Activated naive CD4-positive, alpha-beta T cell treated with anti-CD3 and anti-CD28 coated beads for 36 hours (primary cell): ENCODE measurements at regions of chr7 and their contacts with region 1.

Region 1: DNA sequence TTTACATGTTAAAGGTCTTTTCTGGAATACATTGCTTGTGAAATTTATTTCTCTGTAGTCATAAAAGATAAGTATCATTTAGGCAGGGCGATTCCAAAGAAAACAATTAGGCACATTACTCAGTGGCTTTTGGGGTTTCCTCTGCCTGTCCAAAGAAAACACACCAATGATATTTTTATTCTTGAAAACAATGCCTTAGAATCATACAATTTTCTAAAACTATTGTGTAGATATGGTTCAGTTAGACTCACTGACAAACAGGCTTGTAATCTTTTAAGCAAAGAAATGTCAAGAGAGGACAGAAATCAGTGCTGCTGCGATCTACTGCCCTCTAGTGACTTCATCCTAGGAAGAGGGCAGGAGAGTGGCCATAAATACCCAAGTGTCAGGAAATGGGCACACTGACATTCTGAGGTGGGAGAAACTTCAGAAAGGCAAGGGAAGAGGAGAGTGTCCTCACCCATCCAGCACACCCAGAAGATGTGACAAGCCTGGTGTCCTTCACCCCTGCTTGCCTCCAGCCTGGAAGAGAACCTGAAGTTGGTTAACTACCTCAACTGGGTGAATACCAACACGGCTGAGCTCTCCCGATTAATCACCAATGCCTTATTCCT is 120.5 kb downstream of the GALNT11 start:
- DNase-seq: peak; percentile 62
- H3K4me3 Mint-ChIP-seq: no peak overlapping the region
- H3K27ac Mint-ChIP-seq: peak overlapping the region; percentile 87
- H3K4me1 Mint-ChIP-seq: peaks cover 40% of the 10 kb centered on the region
- H3K27me3 Mint-ChIP-seq: no peaks in the 10 kb centered on the region

Region 2: DNA sequence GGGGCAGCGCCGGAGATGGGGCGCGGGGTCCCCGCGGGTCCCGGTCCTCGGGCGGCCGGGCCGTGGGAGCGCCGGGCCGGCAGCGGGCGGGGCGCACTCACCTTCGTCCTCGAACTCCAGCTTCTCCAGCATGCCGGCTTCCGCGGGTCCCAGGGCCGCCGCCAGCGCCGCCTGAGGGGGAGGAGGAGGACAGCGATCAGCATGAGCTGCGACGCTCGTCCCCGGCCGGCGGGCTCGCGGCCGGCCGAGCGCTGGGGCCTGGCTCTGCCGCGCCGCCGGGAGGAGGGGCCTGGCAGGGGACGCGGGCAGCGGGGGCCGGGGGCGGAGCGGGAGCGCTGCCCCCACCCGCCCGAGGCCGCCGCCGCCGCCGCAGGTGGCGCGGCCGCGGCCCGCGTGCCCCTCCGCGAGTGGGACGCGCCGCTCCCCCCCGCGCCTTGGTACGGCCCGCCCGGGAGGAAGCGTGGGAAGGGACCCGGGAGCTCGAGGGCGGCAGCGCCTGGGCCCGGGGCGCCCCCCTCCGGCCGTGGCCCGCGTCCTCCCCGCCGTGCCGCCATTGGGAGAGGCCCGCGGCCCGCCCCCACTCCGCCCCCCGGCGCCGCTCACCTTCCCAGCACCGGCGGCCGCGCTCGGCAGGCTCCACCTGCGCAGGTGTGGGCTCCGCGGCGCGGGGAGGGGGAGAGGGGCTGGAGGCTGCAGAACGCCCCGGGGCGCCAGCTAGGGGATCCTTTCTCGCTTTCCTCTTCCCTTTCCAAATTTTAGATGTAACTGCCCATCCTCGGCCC is 513.8 kb before region 1 on chr7:
- CTCF ChIA-PET with region 1: no interaction called
- intact Hi-C with region 1: loop called (anchors 1 kb)
- DNase-seq: peak; percentile 87
- H3K4me3 Mint-ChIP-seq: peak overlapping the region; percentile 95
- H3K27ac Mint-ChIP-seq: peak overlapping the region; percentile 99
- H3K4me1 Mint-ChIP-seq: peaks cover 23% of the 10 kb centered on the region
- H3K27me3 Mint-ChIP-seq: no peaks in the 10 kb centered on the region

Region 3: GRCh38 chr7:151876899-151877777 is 268.8 kb before region 1 on chr7 and contains the start of gene PRKAG2:
- CTCF ChIA-PET with region 1: no interaction called
- intact Hi-C with region 1: loop called (anchors 1 kb)
- DNase-seq: peak; percentile 63
- H3K4me3 Mint-ChIP-seq: peak within 1 kb of the TSS; percentile 96
- H3K27ac Mint-ChIP-seq: peak within 1 kb of the TSS; percentile 81
- H3K4me1 Mint-ChIP-seq: peaks cover 10% of the 10 kb centered on the region
- H3K27me3 Mint-ChIP-seq: no peaks in the 10 kb centered on the region
- total RNA-seq, gene PRKAG2: 16.9 to 18.7 TPM

Region 4: DNA sequence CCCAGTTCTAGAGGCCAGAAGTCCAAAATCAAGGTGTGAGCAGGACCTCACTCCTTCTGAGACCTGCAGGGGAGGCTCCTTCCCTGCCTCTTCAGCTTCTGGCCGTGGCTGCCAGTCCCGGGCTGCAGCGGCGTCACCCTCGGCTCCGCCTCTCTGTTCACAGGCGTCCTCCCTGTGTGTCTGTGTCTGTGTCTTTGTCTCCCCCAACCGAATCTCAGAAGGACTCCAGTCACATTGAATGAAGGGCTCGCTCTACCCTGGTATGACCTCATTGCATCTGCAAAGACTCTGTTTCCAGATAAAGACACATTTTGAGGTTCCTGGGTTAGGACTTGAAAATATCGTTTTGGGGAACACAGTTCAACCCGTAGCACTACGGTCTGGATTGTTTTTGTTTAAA is 153.6 kb before region 1 on chr7:
- CTCF ChIA-PET with region 1: no interaction called
- intact Hi-C with region 1: loop called (anchors 1 kb)
- DNase-seq: peak; percentile 70
- H3K4me3 Mint-ChIP-seq: no peak overlapping the region
- H3K27ac Mint-ChIP-seq: no peak overlapping the region
- H3K4me1 Mint-ChIP-seq: peaks cover 7% of the 10 kb centered on the region
- H3K27me3 Mint-ChIP-seq: peaks cover 8% of the 10 kb centered on the region

Region 5: GRCh38 chr7:152035817-152036216 is 110.1 kb before region 1 on chr7:
- CTCF ChIA-PET with region 1: no interaction called
- intact Hi-C with region 1: no loop called
- DNase-seq: no peak
- H3K4me3 Mint-ChIP-seq: no peak overlapping the region
- H3K27ac Mint-ChIP-seq: no peak overlapping the region
- H3K4me1 Mint-ChIP-seq: peaks cover 6% of the 10 kb centered on the region
- H3K27me3 Mint-ChIP-seq: no peaks in the 10 kb centered on the region

Region 6: GRCh38 chr7:152076324-152076866 is 69.6 kb before region 1 on chr7:
- CTCF ChIA-PET with region 1: no interaction called
- intact Hi-C with region 1: loop called (anchors 2 kb)
- DNase-seq: peak; percentile 48
- H3K4me3 Mint-ChIP-seq: no peak overlapping the region
- H3K27ac Mint-ChIP-seq: no peak overlapping the region
- H3K4me1 Mint-ChIP-seq: peaks cover 26% of the 10 kb centered on the region
- H3K27me3 Mint-ChIP-seq: no peaks in the 10 kb centered on the region

Region 7: DNA sequence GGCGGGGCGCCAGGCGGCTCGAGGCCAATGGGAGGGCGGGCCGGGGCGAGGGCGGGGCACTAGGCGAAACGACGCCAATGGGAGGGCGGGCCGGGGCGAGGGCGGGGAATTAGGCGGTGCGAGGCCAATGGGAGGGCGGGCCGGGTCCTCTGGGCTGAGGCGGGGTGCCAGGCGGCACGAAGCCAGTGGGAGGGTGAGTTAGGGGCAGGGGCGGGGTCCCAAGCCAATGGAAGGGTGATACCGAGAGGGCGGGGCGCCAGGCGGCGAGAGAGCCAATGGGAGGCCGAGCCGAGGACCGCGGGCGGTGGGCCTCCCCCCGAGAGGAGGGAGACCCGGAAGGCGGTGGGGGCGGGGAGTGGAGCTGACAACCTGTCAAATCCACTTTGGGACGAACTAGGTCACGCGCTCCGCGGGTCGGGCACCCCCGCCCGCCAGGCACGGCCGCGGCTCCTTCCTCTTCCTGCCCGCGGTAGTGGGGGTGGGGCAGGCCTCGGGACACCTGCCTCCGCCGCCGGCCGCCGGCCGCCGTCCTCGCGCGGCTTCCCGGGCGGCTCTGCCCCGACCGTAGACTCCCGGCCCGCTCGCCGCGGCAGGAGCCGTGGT is 317.9 kb after region 1 on chr7:
- CTCF ChIA-PET with region 1: no interaction called
- intact Hi-C with region 1: loop called (anchors 2 kb)
- DNase-seq: peak; percentile 100
- H3K4me3 Mint-ChIP-seq: peak overlapping the region; percentile 89
- H3K27ac Mint-ChIP-seq: no peak overlapping the region
- H3K4me1 Mint-ChIP-seq: peaks cover 8% of the 10 kb centered on the region
- H3K27me3 Mint-ChIP-seq: no peaks in the 10 kb centered on the region

Region 8: GRCh38 chr7:152537639-152538038 is 391.7 kb after region 1 on chr7:
- CTCF ChIA-PET with region 1: no interaction called
- intact Hi-C with region 1: no loop called
- DNase-seq: no peak
- H3K4me3 Mint-ChIP-seq: no peak overlapping the region
- H3K27ac Mint-ChIP-seq: no peak overlapping the region
- H3K4me1 Mint-ChIP-seq: no peaks in the 10 kb centered on the region
- H3K27me3 Mint-ChIP-seq: no peaks in the 10 kb centered on the region

Region 9: DNA sequence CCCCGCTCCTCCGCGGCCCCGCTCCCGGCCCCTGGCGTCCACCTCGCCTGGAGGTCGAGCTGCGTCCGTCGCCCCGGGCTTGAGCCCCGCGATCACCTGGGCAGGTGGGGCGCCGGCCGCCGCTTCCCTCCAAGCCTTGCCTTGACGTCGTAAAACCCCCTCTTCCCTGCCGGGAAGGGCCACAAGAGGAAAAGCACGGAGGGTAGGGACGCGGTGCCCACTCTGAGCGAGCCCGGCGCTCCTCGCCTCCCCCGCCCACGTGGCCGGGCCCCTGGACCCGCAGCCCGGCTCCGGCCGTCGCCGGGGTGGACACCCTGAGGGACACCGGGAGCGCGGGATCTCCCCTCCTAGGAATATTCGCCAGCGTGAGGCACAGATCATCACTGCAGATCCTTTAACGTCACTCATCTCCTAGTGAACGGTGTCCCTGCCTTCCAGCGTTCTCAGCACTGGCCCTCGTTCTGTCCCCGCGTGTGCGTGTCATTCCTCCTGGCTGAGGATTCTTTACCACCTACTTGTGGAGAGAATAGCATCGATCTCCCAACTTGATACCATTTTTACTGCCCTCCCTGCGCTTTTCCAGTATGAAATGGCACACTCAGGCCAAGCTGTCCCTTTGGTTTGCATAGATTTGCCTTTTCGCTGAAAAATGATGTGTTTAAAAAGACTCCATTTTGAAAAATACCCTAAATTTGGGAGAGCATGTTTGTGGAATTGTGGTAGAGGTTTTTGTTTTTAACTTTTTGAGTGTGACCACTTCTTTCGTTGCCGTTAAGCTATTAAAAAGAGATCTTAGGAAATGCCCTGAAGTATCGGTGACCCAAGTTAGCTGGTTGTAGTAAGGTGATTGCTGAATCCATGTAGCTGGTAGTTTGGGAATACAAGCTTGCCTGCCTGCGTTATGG is 614.2 kb after region 1 on chr7:
- CTCF ChIA-PET with region 1: no interaction called
- intact Hi-C with region 1: loop called (anchors 10 kb)
- DNase-seq: peak; percentile 31
- H3K4me3 Mint-ChIP-seq: peak overlapping the region; percentile 84
- H3K27ac Mint-ChIP-seq: peak overlapping the region; percentile 79
- H3K4me1 Mint-ChIP-seq: peaks cover 20% of the 10 kb centered on the region
- H3K27me3 Mint-ChIP-seq: no peaks in the 10 kb centered on the region